Sciatic nerve (tissue), 2 donors: ENCODE measurements at regions of chr9 and their contacts with region 1.

Region 1: DNA sequence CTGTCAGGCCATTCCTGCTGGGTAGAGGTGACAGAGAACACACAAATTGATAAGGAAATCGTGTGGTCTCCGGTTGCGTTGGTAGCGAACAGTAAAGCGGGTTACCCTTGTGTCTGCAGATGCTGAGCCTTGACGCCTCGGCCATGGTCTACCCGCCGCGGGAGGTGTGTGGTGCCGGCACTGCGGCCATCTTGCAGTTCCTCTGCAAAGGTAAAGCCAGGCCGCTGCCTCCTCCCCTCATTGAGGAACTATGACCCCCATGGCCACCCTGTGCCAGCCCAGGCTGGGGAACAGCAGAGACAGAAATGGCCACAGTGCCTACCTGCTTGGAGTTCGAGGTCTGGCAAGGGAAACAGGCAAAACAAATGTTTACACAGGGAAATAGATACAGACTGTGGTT is 16.3 kb downstream of the LRSAM1 start:
- DNase-seq: no peak
- ATAC-seq: no peak

Region 2: DNA sequence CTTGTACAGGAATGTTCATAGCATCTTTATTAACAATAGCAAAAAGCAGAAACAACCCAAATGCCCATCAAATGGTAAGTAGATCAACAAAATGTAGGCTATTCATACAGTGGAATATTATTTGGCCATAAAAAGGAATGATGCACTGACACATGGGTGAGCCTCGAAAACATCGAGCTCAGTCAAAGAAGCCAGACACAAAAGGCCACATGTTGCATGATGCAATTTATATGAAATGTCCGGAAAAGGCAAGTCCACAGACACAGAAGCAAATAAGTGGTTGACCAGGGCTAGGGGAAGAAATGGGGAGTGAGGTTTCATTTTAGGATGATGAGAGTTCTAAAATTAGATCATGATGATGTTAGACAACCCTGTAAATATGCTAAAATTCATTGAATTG is 87.1 kb before region 1 on chr9:
- intact Hi-C with region 1: no loop called
- DNase-seq: no peak
- ATAC-seq: no peak

Region 3: GRCh38 chr9:127418037-127418471 is 49.6 kb before region 1 on chr9:
- intact Hi-C with region 1: no loop called
- DNase-seq: no peak
- ATAC-seq: peak; percentile 17

Region 4: DNA sequence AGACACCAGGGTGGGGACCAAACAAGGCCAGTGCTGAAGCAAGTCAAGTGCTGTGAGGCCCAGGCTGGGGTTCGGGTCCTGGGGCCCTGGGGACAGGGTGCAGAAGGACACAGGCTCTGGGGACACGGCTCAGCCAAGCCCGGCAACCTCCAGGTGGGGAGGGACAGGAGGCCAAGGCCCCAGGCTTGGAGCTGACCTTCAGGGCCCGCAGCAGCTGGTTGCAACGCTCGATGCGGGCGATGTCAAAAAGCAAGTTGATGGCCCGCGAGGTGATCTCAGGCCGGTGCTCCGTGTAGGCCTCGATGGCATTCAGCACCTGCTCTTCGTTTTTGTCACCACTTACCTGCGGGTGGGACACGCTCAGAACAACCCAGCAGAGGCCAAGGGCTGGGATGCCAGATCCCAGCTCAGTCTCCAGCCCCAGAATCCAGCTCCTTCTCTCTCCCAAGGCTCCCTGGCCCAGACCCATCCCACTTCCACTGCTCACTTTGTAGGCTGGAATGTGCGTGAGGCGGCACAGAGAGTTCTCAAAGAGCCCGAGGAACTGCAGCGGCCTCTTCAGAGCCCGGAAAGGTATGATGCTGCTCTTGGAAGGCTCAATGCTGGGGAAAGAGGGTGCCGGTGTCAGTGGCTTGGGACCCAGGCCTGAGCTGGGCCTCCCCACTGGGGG is 1283.4 kb after region 1 on chr9:
- intact Hi-C with region 1: loop called (anchors 5 kb)
- DNase-seq: no peak
- ATAC-seq: peak; percentile 18